BJ (cell line): ENCODE measurements at regions of chr17 and their contacts with region 1.

Region 1: GRCh38 chr17:49556223-49556971 is 19.3 kb upstream of the NXPH3 start:
- DNase-seq: no peak
- H3K4me3 ChIP-seq: no peak overlapping the region
- H3K27me3 ChIP-seq: 0 out of 2 replicates have a peak, but pooled peaks cover 1% of the 10 kb centered on the region
- CTCF ChIP-seq: peak; percentile 99

Region 2: DNA sequence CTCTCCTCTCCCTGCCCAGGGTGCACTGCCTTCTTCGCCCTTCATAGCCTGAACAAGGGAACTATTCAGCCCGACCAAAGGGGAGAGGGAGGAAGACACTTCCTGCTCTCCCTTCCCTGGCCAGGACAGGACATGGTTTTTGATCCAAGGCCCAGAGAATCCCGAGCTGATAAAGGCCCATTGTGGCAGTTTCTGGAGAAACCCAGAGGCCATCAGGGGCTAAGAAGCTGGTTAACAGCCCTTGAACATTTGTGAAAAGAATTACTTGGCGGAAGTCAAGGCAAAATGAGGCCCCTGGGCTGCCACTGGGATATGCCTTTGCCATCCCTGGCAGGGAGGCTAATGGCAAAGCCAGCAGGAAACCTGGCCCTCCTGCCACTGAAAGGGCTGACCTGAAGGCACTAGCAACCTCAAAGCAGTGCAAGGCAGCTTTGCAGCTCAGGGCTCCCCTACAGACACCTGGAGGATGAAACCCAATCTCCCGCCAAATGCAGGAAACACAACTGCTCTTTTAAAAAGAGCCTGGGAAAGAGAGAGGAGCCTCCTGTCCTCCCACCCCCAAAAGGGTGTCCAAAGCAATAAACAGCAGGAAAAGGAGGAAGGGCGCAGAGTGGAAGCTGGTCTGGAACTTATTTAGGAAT is 154.3 kb before region 1 on chr17:
- CTCF ChIA-PET with region 1: interaction called, 83 read pairs
- POLR2A ChIA-PET with region 1: no interaction called
- DNase-seq: no peak
- H3K4me3 ChIP-seq: no peak overlapping the region
- H3K27me3 ChIP-seq: no peaks in the 10 kb centered on the region
- CTCF ChIP-seq: no peak

Region 3: GRCh38 chr17:49443862-49444261 is 112.5 kb before region 1 on chr17:
- CTCF ChIA-PET with region 1: interaction called, 294 read pairs
- POLR2A ChIA-PET with region 1: no interaction called
- DNase-seq: no peak
- H3K4me3 ChIP-seq: no peak overlapping the region
- H3K27me3 ChIP-seq: peaks cover 12% of the 10 kb centered on the region
- CTCF ChIP-seq: no peak

Region 4: GRCh38 chr17:49496183-49496866 is 60.1 kb before region 1 on chr17:
- CTCF ChIA-PET with region 1: interaction called, 68 read pairs
- POLR2A ChIA-PET with region 1: no interaction called
- DNase-seq: no peak
- H3K4me3 ChIP-seq: no peak overlapping the region
- H3K27me3 ChIP-seq: peaks cover 59% of the 10 kb centered on the region
- CTCF ChIP-seq: peak; percentile 41; the same call in 1 of the 2 replicates

Region 5: DNA sequence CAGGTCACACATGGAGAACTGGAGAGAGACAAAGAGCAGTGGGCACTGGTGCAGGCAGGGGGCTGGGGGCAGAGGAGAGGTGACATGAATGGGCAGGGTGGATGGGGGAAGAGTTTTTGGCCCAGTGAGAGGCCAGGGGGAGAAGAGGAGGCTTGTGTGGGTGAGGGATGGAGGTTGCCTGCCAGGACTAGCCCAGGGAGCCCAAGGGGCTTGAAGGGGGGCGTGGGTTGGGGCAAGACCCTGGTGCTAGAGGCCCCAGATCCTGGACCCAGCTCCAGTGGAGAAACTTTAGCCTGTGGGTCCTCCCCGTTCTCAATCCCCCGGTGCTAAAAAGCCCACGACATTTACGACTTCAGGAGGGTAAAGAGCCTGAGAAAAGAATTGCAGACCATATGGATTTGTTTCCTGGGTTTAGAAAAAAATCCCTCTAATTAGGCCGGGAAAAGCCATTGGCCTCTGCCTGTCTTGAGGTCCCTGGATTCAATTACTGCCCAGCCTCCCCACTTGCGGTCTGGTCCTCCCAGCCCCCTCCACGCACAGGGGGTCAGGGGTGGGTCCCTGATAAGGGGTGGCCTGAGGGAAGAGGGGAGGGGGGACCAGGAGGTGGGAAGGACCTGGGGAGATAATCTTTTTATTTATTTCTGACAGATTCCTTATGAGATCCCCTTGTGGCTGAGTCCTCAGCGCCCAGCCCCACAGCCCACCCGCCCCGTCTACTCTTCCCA is 28.3 kb before region 1 on chr17:
- CTCF ChIA-PET with region 1: interaction called, 16 read pairs
- POLR2A ChIA-PET with region 1: no interaction called
- DNase-seq: no peak
- H3K4me3 ChIP-seq: no peak overlapping the region
- H3K27me3 ChIP-seq: peaks cover 11% of the 10 kb centered on the region
- CTCF ChIP-seq: no peak

Region 6: GRCh38 chr17:49603720-49604119 is 47.3 kb after region 1 on chr17:
- CTCF ChIA-PET with region 1: no interaction called
- POLR2A ChIA-PET with region 1: no interaction called
- DNase-seq: no peak
- H3K4me3 ChIP-seq: no peak overlapping the region
- H3K27me3 ChIP-seq: no peaks in the 10 kb centered on the region
- CTCF ChIP-seq: no peak

Region 7: GRCh38 chr17:49694847-49695683 is 138.7 kb after region 1 on chr17:
- CTCF ChIA-PET with region 1: interaction called, 38 read pairs
- POLR2A ChIA-PET with region 1: no interaction called
- DNase-seq: no peak
- H3K4me3 ChIP-seq: no peak overlapping the region
- H3K27me3 ChIP-seq: no peaks in the 10 kb centered on the region
- CTCF ChIP-seq: peak; percentile 90